ENCODE measurements at regions of chr11 and their contacts with region 1.

Region 1: DNA sequence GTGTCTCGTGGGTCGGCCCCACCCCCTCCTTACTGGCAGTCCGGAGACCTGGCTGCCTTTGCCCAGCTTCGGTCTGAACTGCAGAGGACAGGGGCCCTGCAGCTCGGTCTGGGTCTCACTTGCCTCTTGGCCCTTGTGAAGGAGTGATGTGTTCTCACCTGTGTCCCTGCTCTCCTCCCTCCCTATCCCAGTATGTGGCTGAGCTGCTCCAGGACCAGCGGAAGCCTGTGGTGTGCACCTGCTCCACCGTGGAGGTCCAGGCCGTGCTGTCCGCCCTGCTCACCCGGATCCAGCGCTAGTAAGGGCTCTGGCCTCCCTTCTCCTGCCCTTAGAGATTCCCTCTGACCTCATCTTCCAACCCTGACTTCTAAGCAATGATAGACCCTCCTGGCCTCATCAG is 35.7 kb upstream of the RAB1B start:
- DNase-seq: no peak
- ATAC-seq: no peak
- H3K4me3 ChIP-seq: no peak overlapping the region
- H3K4me3 Mint-ChIP-seq: no peak overlapping the region
- H3K27ac ChIP-seq: no peak overlapping the region
- H3K27ac Mint-ChIP-seq: peak overlapping the region in 1 of 2 donors; percentile 36
- H3K4me1 ChIP-seq: peaks cover 14% of the 10 kb centered on the region
- H3K4me1 Mint-ChIP-seq: peaks cover 9% of the 10 kb centered on the region in 2 donors
- H3K27me3 ChIP-seq: no peaks in the 10 kb centered on the region
- H3K27me3 Mint-ChIP-seq: no peaks in the 10 kb centered on the region
- CTCF ChIP-seq: no peak

Region 2: DNA sequence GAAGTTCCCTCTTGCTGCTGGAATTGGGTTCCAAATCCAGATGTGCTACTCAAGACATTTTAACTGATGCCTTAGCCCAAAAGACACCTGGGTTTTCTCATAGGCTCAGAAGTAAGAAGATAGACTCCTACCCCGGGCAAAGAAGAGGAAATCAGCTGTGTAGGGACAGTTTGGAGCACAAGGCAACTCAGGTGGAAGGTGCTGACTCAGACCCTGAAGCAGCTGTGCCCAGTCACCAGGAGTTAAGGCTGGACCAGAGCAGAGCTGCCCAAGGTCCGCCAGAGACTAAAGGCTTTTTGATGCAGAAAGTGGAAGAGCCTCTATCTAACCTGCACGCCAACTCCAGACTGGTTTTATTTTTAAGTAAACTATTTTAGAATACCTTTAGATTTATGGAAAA is 15.0 kb after region 1 on chr11:
- intact Hi-C with region 1: loop called (anchors 2 kb)
- DNase-seq: no peak
- ATAC-seq: no peak
- H3K4me3 ChIP-seq: no peak overlapping the region
- H3K4me3 Mint-ChIP-seq: no peak overlapping the region
- H3K27ac ChIP-seq: no peak overlapping the region
- H3K27ac Mint-ChIP-seq: peak overlapping the region in 1 of 2 donors; percentile 32
- H3K4me1 ChIP-seq: no peaks in the 10 kb centered on the region
- H3K4me1 Mint-ChIP-seq: peaks cover 0 to 8% of the 10 kb centered on the region in 2 donors
- H3K27me3 ChIP-seq: no peaks in the 10 kb centered on the region
- H3K27me3 Mint-ChIP-seq: no peaks in the 10 kb centered on the region
- CTCF ChIP-seq: no peak